Left lung (tissue), 14 donors: ENCODE measurements at regions of chr1 and their contacts with region 1.

Region 1: GRCh38 chr1:221435504-221435904 is 306.4 kb downstream of the DUSP10 start:
- DNase-seq: peak in 2 of 4 donors; percentile 81 to 92
- ATAC-seq: peak; percentile 87
- H3K4me3 ChIP-seq: no peak overlapping the region
- H3K27ac ChIP-seq: peak overlapping the region in 1 of 2 donors; percentile 22
- H3K4me1 ChIP-seq: peaks cover 0 to 20% of the 10 kb centered on the region in 2 donors
- H3K27me3 ChIP-seq: no peaks in the 10 kb centered on the region
- CTCF ChIP-seq: peak; percentile 87 to 91

Region 2: DNA sequence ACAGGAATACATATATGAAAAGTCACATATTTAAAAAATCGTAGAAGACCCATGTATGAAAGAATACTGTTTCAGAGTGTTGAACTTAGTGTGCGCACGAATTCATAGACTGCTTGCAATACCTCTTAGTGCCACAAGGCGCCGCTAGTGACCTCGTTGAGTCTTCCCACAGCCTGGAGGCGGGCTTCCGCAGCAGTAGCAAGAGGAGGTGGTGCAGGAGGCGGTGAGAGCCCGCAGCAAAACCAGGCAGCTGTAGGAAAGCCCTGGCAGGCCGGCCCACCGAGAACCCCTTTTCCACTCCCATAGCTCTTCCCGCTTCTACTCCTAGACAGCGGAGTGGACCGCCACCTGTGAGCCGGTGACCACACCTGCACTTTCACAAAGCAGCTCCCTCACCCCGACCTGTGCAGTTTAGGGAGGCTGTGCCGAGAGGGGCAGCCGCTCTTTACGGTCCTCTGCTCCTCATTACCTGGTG is 625.3 kb before region 1 on chr1:
- intact Hi-C with region 1: loop called in 1 of 2 experiments (anchors 10 kb)
- DNase-seq: peak; percentile 79 to 92 (median 86)
- ATAC-seq: peak; percentile 99
- H3K4me3 ChIP-seq: no peak overlapping the region
- H3K27ac ChIP-seq: no peak overlapping the region
- H3K4me1 ChIP-seq: peaks cover 0 to 13% of the 10 kb centered on the region in 2 donors
- H3K27me3 ChIP-seq: no peaks in the 10 kb centered on the region
- CTCF ChIP-seq: peak; percentile 88 to 95

Region 3: GRCh38 chr1:221263831-221264767 is 171.4 kb before region 1 on chr1:
- intact Hi-C with region 1: loop called (anchors 10 kb)
- DNase-seq: peak in 2 of 4 donors; percentile 50 to 51
- ATAC-seq: peak; percentile 95
- H3K4me3 ChIP-seq: no peak overlapping the region
- H3K27ac ChIP-seq: peak overlapping the region; percentile 48 to 58
- H3K4me1 ChIP-seq: no peaks in the 10 kb centered on the region
- H3K27me3 ChIP-seq: no peaks in the 10 kb centered on the region
- CTCF ChIP-seq: peak; percentile 48 to 56

Region 4: DNA sequence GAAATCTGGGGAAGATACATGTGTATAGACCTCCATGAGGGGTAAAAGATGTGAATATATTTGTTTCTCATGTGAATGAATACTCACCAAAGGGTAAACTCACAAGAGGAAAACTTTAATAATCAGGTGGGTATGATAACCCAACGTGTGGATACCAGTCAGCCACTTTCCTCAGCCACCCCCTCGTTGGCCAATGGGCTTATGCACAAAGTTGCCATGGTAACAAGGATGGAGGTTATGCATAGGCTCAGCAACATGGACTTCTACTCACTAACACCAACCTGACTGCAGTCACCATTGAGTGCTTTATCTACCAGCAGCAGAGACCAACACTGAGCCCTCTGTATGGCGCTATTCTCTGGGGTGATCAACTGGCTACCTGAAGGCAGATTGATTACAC is 118.0 kb before region 1 on chr1:
- intact Hi-C with region 1: no loop called
- DNase-seq: no peak
- ATAC-seq: no peak
- H3K4me3 ChIP-seq: no peak overlapping the region
- H3K27ac ChIP-seq: no peak overlapping the region
- H3K4me1 ChIP-seq: no peaks in the 10 kb centered on the region
- H3K27me3 ChIP-seq: no peaks in the 10 kb centered on the region
- CTCF ChIP-seq: no peak

Region 5: GRCh38 chr1:221487781-221488524 is 52.4 kb after region 1 on chr1:
- intact Hi-C with region 1: no loop called
- DNase-seq: no peak
- ATAC-seq: peak; percentile 50
- H3K4me3 ChIP-seq: no peak overlapping the region
- H3K27ac ChIP-seq: no peak overlapping the region
- H3K4me1 ChIP-seq: no peaks in the 10 kb centered on the region
- H3K27me3 ChIP-seq: no peaks in the 10 kb centered on the region
- CTCF ChIP-seq: no peak

Region 6: GRCh38 chr1:222048094-222048595 is 612.6 kb after region 1 on chr1:
- intact Hi-C with region 1: no loop called
- DNase-seq: no peak
- ATAC-seq: no peak
- H3K4me3 ChIP-seq: no peak overlapping the region
- H3K27ac ChIP-seq: no peak overlapping the region
- H3K4me1 ChIP-seq: no peaks in the 10 kb centered on the region
- H3K27me3 ChIP-seq: no peaks in the 10 kb centered on the region
- CTCF ChIP-seq: no peak